ENCODE measurements at regions of chr12 and their contacts with region 1.

Region 1: DNA sequence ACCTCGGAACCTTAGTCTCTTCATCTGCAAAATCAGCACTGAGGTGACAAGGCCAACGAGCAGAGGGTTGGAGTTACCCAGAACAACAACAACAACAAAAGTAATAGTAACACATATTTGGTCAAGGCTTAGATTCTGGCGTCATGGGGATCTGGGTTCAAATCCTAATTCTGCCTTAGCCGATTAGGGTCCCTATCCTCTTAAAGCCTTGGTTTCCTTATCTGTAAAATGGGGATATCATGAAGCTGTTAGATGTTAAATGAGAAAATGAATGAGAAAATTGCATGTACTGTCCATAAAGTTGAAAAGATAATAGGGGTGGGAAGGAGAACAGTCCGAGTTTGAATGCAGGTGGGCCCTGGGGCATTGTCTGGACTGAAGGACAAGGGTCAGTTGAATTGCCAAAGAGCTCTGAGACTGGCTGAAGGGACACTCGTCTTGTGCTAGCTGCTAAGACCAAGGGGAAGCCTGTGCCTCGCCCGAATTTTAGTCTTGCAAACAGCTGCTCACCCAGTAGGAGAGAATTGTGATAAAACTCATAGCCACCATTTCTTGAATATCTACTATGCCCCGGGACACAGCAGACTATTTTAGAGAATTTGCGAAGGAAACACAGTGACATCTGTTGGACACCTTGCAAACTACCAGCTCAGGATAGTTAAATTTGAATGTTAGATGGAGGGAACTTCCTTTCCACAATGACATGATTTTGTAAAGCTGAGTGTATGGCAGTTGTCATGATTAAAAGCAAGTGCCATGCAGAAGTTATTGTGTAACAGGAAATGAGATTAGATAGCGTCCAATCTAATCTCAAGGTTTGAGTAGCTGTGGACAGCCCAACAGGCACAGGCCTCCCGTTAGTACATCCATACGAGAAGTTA is 6.8 kb upstream of the HNF1A start:
- DNase-seq: peak in 10 of 14 experiments; percentile 4 to 79 (median 22)
- ATAC-seq: peak; percentile 98
- H3K4me3 ChIP-seq: no peak overlapping the region
- H3K4me3 Mint-ChIP-seq: no peak overlapping the region
- H3K27ac ChIP-seq: no peak overlapping the region
- H3K27ac Mint-ChIP-seq: no peak overlapping the region
- H3K4me1 ChIP-seq: peaks cover 6% of the 10 kb centered on the region
- H3K4me1 Mint-ChIP-seq: no peaks in the 10 kb centered on the region
- H3K27me3 ChIP-seq: no peaks in the 10 kb centered on the region
- H3K27me3 Mint-ChIP-seq: no peaks in the 10 kb centered on the region
- CTCF ChIP-seq: peak; percentile 78

Region 2: DNA sequence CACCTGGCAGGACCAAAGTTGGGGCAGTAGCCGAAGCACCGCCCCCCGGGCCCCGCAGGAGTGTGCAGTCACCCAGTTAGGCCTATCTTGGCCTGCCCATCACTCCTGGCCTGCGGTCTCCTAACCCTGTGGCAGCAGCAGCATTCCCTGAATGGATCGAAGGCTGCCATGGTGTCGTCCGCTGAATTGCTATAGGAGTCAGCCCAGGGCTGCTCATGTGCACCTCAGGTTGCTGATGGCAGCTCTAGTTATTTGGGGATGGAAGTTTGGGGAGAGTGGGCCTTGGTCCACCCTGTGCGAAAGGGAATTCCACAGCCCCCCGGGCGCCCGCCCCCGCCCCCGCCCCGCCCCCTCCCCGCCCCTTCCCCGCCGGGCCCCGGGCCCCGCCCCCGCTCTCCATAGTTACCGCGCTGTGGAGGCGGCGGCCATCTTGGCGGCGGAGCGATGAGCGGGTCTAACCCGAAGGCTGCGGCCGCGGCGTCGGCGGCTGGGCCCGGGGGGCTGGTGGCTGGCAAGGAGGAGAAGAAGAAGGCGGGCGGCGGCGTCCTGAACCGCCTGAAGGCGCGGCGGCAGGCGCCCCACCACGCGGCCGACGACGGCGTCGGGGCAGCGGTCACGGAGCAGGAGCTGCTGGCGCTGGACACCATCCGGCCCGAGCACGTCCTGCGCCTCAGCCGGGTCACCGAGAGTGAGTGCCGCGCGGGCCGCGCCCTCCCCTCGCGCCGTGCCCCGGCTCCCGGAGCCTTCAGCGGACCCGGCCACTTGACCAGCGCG is 261.3 kb before region 1 on chr12 and contains the start of gene UNC119B:
- CTCF ChIA-PET with region 1: interaction called, 5 read pairs
- POLR2A ChIA-PET with region 1: no interaction called
- intact Hi-C with region 1: loop called in 1 of 2 experiments (anchors 10 kb)
- DNase-seq: peak; percentile 57 to 87 (median 70)
- ATAC-seq: peak; percentile 86
- H3K4me3 ChIP-seq: peak within 1 kb of the TSS; percentile 83
- H3K4me3 Mint-ChIP-seq: peak within 1 kb of the TSS; percentile 96
- H3K27ac ChIP-seq: peak within 1 kb of the TSS; percentile 13 to 58
- H3K27ac Mint-ChIP-seq: peak within 1 kb of the TSS; percentile 86
- H3K4me1 ChIP-seq: peaks cover 30% of the 10 kb centered on the region
- H3K4me1 Mint-ChIP-seq: peaks cover 42% of the 10 kb centered on the region
- H3K27me3 ChIP-seq: no peaks in the 10 kb centered on the region
- H3K27me3 Mint-ChIP-seq: no peaks in the 10 kb centered on the region
- CTCF ChIP-seq: no peak
- total RNA-seq, gene UNC119B: 10.7 TPM

Region 3: DNA sequence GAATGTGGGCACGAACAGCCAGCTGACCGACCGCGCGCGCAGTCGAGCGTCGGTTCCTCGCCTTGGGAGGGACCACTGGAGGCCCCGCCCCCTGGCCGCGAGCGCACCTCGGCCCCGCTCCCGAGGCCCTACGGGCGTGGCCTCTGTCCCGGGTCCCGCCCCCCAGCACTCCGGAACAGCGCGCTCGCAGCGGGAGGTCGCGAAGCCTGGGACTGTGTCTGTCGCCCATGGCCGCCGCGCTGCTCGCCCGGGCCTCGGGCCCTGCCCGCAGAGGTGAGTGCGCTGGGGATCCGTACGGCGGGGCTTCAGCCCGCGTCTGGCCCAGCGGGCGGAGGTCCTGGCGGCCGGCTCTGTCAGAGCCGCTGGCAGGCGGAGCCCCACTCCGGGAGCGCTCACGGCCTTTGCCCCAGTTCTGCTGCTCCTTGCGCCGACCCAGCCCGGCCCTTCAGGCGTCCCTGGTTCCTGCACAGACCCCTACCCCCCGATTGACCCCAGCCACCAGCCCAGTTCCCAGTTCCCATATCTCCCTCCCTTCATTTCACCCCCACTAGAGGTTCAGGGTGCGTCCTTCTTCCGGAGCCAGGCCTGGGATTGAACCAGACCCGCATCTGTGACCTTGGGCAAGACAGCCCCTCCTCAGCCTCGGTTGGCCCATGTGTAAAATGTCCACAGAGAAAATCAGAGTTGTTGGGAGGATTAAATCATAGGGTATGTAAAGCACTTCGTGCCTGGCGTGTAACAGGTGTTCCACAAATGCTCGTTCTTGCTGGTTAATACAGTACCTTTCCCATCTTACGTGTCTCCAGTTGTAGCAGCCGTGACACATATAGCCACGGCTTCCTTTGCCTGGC is 245.7 kb before region 1 on chr12 and contains the start of gene ACADS:
- CTCF ChIA-PET with region 1: no interaction called
- POLR2A ChIA-PET with region 1: no interaction called
- intact Hi-C with region 1: no loop called
- DNase-seq: peak; percentile 72 to 95 (median 88)
- ATAC-seq: peak; percentile 99
- H3K4me3 ChIP-seq: peak within 1 kb of the TSS; percentile 75
- H3K4me3 Mint-ChIP-seq: peak within 1 kb of the TSS; percentile 97
- H3K27ac ChIP-seq: peak within 1 kb of the TSS in 1 of 2 donors; percentile 18
- H3K27ac Mint-ChIP-seq: peak within 1 kb of the TSS; percentile 72
- H3K4me1 ChIP-seq: peaks cover 28% of the 10 kb centered on the region
- H3K4me1 Mint-ChIP-seq: peaks cover 21% of the 10 kb centered on the region
- H3K27me3 ChIP-seq: no peaks in the 10 kb centered on the region
- H3K27me3 Mint-ChIP-seq: no peaks in the 10 kb centered on the region
- CTCF ChIP-seq: no peak
- total RNA-seq, gene ACADS: 8.9 to 9.2 TPM

Region 4: DNA sequence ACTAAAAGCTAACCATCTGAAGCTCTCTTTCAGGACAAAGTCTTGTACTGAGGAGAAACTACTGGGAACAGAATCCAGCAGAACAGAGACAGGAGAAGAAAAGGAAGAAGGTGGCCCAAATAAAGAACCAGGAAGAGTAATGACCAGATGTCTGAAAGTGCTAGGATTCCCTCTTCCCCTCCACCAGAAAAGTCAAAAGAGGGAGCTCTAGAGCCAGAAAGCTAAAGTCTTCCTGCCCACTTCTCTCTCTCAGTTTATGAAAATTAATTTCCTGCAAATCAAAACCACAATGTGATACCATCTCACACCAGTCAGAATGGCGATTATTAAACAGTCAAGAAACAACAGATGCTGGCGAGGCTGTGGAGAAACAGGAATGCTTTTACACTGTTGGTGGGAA is 114.6 kb before region 1 on chr12:
- CTCF ChIA-PET with region 1: interaction called, 12 read pairs
- POLR2A ChIA-PET with region 1: no interaction called
- intact Hi-C with region 1: loop called (anchors 10 kb)
- DNase-seq: peak in 3 of 14 experiments; percentile 39 to 42 (median 40)
- ATAC-seq: peak; percentile 17
- H3K4me3 ChIP-seq: no peak overlapping the region
- H3K4me3 Mint-ChIP-seq: peak overlapping the region; percentile 8
- H3K27ac ChIP-seq: no peak overlapping the region
- H3K27ac Mint-ChIP-seq: peak overlapping the region; percentile 55
- H3K4me1 ChIP-seq: peaks cover 31% of the 10 kb centered on the region
- H3K4me1 Mint-ChIP-seq: peaks cover 68% of the 10 kb centered on the region
- H3K27me3 ChIP-seq: no peaks in the 10 kb centered on the region
- H3K27me3 Mint-ChIP-seq: no peaks in the 10 kb centered on the region
- CTCF ChIP-seq: peak; percentile 55

Region 5: DNA sequence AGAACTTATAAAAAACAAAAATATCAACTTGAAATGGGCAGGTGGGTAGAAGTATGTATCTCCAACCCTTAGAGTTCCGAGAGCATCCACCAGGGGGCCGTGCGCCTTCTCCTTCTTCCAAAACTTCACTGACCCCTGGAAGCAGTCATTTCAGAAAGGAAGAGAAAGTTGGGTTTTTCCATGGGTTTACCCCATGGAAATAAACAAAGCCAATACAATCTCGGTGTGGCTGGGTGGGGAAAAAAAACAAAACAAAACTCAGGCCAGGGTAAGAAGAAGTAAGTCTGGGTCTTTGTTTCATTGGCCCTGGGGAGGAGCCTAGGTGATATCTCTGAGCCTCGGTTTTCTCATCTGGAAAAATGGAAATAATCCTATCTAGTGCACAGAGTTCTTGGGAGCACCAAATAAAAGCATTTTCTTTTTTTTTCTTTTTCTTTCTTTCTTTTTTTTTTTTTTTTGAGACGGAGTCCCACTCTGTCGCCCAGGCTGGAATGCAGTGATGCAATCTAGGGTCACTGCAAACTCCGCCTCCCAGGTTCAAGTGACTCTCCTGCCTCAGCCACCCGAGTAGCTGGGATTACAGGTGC is 26.8 kb before region 1 on chr12:
- CTCF ChIA-PET with region 1: interaction called, 11 read pairs
- POLR2A ChIA-PET with region 1: no interaction called
- intact Hi-C with region 1: loop called (anchors 1 kb)
- DNase-seq: peak; percentile 32 to 80 (median 58)
- ATAC-seq: peak; percentile 71
- H3K4me3 ChIP-seq: no peak overlapping the region
- H3K4me3 Mint-ChIP-seq: no peak overlapping the region
- H3K27ac ChIP-seq: no peak overlapping the region
- H3K27ac Mint-ChIP-seq: no peak overlapping the region
- H3K4me1 ChIP-seq: no peaks in the 10 kb centered on the region
- H3K4me1 Mint-ChIP-seq: peaks cover 5% of the 10 kb centered on the region
- H3K27me3 ChIP-seq: no peaks in the 10 kb centered on the region
- H3K27me3 Mint-ChIP-seq: peaks cover under 1% of the 10 kb centered on the region
- CTCF ChIP-seq: peak; percentile 68

Measured in CD4-positive, alpha-beta T cell (primary cell).